CD4-positive, alpha-beta memory T cell (primary cell): ENCODE measurements at regions of chr17 and their contacts with region 1.

Region 1: DNA sequence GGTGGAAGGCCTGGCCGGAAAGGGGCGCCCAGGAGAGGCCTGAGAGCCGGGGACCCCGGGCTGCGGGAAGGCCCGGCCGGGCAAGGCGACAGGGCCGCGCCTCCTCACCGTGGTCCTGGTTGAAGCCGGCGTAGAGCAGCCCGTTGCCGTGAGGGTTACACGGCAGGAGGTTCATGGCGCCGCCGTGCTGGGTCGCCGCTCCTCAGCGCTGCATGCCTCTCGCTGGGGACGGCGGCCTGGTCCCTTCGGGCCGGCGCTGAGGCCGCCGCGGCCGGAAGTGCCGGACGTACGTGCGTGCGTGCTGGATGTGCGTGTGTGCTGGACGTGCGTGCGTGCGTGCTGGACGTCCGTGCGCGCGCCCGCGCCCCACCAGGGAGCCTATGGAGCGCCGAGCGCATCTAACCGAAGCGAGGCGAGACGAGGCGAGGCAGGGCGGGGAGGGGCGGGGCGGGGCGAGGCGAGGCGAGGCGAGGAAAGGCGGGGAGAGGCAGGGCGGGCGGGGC is at the start of gene WDR45B:
- DNase-seq: peak; percentile 87 to 89 (median 88)
- H3K4me3 ChIP-seq: peak within 1 kb of the TSS; percentile 78 to 89
- H3K4me3 Mint-ChIP-seq: peak within 1 kb of the TSS; percentile 79 to 89 (median 84)
- H3K27ac ChIP-seq: peak within 1 kb of the TSS; percentile 93
- H3K27ac Mint-ChIP-seq: peak within 1 kb of the TSS; percentile 84 to 92 (median 89)
- H3K4me1 ChIP-seq: peaks cover 30% of the 10 kb centered on the region
- H3K4me1 Mint-ChIP-seq: peaks cover 15 to 41% (median 25%) of the 10 kb centered on the region in 4 donors
- H3K27me3 ChIP-seq: no peaks in the 10 kb centered on the region
- H3K27me3 Mint-ChIP-seq: no peaks in the 10 kb centered on the region
- total RNA-seq, gene WDR45B: 66.3 to 66.7 TPM

Region 2: GRCh38 chr17:82592767-82593589 is 55.2 kb before region 1 on chr17:
- CTCF ChIA-PET with region 1: no interaction called
- POLR2A ChIA-PET with region 1: no interaction called
- intact Hi-C with region 1: loop called (anchors 2 kb)
- DNase-seq: peak; percentile 74 to 87 (median 79)
- H3K4me3 ChIP-seq: peak overlapping the region; percentile 34 to 69
- H3K4me3 Mint-ChIP-seq: peak overlapping the region; percentile 69 to 83 (median 75)
- H3K27ac ChIP-seq: peak overlapping the region; percentile 44
- H3K27ac Mint-ChIP-seq: peak overlapping the region; percentile 43 to 95 (median 86)
- H3K4me1 ChIP-seq: peaks cover 36% of the 10 kb centered on the region
- H3K4me1 Mint-ChIP-seq: peaks cover 17 to 39% (median 26%) of the 10 kb centered on the region in 4 donors
- H3K27me3 ChIP-seq: no peaks in the 10 kb centered on the region
- H3K27me3 Mint-ChIP-seq: no peaks in the 10 kb centered on the region

Region 3: DNA sequence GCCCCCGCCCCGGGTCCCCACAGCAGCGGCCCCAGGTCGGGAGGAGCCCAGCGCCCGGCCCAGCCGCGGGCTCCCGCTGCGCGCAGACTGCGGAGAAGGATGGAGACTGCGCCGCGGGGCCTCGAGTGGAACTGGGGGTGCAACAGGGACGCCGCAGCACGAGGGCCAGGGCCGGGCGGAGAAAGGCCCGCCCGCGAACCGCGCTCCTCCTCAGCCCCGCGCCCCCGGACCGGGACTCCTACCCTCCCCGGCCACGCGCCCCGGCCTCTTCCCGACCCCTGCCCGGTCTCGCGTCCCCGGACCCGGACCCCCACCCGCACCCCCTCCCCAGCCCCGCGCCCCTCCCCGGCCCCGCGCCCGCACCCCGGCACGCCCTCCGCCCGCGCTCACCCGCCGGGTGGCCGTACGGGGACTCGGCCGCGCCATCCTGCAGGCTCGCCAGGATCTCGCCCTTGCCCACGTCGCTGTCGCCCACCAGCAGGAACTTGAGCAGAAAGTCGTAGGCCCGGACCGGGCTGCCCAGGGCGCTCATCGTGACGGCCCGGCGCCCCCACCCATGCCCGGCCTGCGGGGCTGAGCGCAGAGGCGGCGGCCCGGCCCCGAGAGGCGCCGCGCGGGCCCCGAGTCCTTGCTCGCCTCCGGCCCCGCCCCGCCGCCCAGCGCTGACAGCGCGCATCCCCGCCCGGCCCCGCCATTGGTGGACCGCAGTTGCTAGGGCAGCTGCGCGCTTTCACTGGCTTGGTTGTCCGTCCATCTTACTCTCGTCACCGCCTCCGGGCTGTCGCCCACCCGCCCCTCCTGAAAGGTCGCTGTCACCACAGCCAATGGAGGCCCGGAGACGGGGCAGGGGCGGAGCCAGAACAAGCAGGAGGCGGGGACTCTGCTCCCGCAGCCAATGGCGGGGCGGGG is 50.1 kb after region 1 on chr17 and contains the start of gene RAB40B:
- CTCF ChIA-PET with region 1: no interaction called
- POLR2A ChIA-PET with region 1: interaction called, 4 read pairs
- intact Hi-C with region 1: loop called (anchors 2 kb)
- DNase-seq: peak; percentile 99
- H3K4me3 ChIP-seq: peak within 1 kb of the TSS; percentile 12 to 57
- H3K4me3 Mint-ChIP-seq: peak within 1 kb of the TSS; percentile 84 to 96 (median 90)
- H3K27ac ChIP-seq: peak within 1 kb of the TSS; percentile 6
- H3K27ac Mint-ChIP-seq: peak within 1 kb of the TSS; percentile 20 to 95 (median 77)
- H3K4me1 ChIP-seq: peaks cover 13% of the 10 kb centered on the region
- H3K4me1 Mint-ChIP-seq: peaks cover 4 to 15% (median 10%) of the 10 kb centered on the region in 4 donors
- H3K27me3 ChIP-seq: no peaks in the 10 kb centered on the region
- H3K27me3 Mint-ChIP-seq: no peaks in the 10 kb centered on the region
- total RNA-seq, gene RAB40B: 5.1 to 5.8 TPM

Region 4: GRCh38 chr17:82956726-82957463 is 308.7 kb after region 1 on chr17:
- CTCF ChIA-PET with region 1: no interaction called
- POLR2A ChIA-PET with region 1: no interaction called
- intact Hi-C with region 1: no loop called
- DNase-seq: no peak
- H3K4me3 ChIP-seq: no peak overlapping the region
- H3K4me3 Mint-ChIP-seq: no peak overlapping the region
- H3K27ac ChIP-seq: no peak overlapping the region
- H3K27ac Mint-ChIP-seq: no peak overlapping the region
- H3K4me1 ChIP-seq: no peaks in the 10 kb centered on the region
- H3K4me1 Mint-ChIP-seq: peaks cover 0 to 1% (median 0%) of the 10 kb centered on the region in 4 donors
- H3K27me3 ChIP-seq: no peaks in the 10 kb centered on the region
- H3K27me3 Mint-ChIP-seq: no peaks in the 10 kb centered on the region